ENCODE measurements at regions of chr19 and their contacts with region 1.

Region 1: DNA sequence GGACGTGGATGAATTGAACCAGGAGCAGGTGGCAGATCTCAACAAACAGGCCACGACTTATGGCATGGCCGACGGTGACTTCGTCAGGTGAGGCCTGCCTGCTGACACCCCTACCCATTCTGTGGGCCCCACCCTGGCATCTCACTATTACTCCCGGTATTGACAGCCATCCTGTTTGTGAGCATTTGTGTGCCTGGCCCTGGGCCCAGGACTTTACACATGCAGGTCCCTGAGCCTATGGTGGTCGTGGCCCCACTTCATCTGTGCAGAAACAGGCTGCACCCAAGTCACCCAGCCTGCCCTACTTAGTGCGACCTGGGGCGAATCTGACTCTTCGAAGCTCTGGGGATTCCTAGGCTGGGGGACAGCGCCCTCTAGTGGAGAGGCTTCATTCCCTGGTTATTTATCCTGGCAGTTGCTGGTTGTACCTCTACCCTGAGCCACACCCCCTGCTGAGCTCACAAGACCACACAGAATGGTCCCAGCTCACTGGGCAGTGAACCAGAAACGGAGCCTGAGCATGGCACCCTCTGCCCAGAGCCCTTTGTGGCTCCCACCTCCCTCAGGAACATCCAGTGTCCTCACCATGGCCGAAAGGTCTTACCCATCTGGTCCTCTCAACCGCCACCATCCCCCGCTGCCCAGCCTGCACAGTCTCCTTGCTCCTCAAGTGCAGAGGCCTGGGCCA is 16.9 kb downstream of the ZNF296 start:
- DNase-seq: peak; percentile 89
- H3K4me3 ChIP-seq: no peak overlapping the region
- H3K27ac ChIP-seq: no peak overlapping the region
- H3K4me1 ChIP-seq: no peaks in the 10 kb centered on the region
- H3K27me3 ChIP-seq: no peaks in the 10 kb centered on the region
- CTCF ChIP-seq: peak; percentile 95

Region 2: GRCh38 chr19:44988896-44989556 is 70.4 kb before region 1 on chr19:
- intact Hi-C with region 1: loop called (anchors 1 kb)
- DNase-seq: peak; percentile 75
- H3K4me3 ChIP-seq: no peak overlapping the region
- H3K27ac ChIP-seq: no peak overlapping the region
- H3K4me1 ChIP-seq: no peaks in the 10 kb centered on the region
- H3K27me3 ChIP-seq: no peaks in the 10 kb centered on the region
- CTCF ChIP-seq: peak; percentile 61

Measured in colonic mucosa (tissue), 4 donors.